Sciatic nerve (tissue), 2 donors: ENCODE measurements at regions of chr16 and their contacts with region 1.

Region 1: DNA sequence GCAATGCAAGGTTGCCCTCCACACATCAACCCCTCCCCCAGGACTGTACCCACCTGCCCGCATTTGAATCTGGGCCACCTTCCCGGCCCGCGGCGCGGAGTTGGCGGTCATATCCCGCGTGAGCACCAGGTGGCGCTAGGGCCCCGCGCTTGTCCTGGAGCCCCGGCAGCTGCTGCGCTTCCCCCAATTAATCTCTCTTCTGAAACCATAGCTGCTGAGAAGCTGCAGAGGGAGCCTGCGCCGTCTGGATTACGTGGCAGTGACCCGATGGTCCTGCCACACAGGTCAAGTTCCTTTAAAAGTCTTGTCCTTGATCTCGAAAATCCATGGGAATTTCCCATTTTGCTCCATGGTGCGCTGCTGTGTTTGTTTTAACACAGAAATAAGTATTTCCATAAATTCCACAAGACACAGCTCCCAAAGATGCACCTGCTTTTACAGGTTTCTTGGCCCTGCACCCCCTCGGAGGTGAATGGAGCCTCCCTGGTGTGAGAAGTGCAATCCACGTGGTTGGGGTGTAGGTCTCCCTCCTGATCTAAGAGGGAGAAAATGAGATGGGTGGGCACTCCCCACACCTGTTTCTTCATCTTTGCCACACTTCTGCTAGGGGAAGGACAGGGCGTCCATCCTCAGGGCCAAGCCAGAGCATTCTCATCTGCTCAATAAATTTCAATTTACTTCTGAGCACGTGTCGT is 22.1 kb downstream of the COX4I1 start:
- DNase-seq: peak; percentile 88
- ATAC-seq: peak; percentile 94

Region 2: GRCh38 chr16:85010931-85011845 is 810.4 kb before region 1 on chr16 and contains the start of gene ZDHHC7:
- intact Hi-C with region 1: no loop called
- DNase-seq: peak; percentile 94
- ATAC-seq: peak; percentile 98
- total RNA-seq, gene ZDHHC7: 48.8 TPM

Region 3: DNA sequence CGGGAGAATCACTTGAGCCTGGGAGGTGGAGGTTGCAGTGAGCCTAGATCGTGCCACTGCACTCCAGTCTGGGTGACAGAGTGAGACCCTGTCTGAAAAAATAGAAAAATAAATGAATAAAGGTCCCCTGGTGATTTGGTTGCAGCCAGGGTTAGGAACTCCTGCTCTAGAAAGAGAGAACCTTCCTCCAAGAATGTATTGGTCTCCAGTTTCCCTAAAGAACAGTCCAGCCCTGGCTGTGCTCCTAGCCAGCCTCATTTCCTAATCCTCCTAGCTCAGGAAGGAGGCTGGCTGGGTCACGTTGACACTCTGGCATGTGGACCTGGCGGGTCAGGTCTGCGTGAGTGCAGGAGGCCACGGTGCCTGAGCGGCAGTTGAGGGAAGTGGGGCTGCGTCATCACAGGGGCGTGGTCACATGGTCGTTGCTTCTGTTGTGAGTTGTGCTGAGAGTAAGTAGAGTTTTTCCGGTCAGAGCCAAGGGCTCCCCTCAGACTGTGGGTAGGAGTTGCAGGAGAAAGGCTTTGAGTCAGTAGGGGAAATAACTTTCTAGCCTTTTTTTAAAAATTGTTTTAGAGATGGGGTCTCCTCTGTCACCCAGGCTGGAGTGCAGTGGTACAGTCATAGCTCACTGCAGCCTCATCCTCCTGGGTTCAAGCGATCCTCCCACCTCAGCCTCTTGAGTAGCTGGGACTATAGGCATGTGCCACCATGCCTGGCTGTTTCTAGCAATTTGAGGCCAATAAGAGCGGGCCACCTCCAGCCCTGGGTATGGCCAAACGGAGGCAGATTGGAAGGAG is 515.4 kb before region 1 on chr16:
- intact Hi-C with region 1: no loop called
- DNase-seq: peak; percentile 94
- ATAC-seq: peak; percentile 79

Region 4: DNA sequence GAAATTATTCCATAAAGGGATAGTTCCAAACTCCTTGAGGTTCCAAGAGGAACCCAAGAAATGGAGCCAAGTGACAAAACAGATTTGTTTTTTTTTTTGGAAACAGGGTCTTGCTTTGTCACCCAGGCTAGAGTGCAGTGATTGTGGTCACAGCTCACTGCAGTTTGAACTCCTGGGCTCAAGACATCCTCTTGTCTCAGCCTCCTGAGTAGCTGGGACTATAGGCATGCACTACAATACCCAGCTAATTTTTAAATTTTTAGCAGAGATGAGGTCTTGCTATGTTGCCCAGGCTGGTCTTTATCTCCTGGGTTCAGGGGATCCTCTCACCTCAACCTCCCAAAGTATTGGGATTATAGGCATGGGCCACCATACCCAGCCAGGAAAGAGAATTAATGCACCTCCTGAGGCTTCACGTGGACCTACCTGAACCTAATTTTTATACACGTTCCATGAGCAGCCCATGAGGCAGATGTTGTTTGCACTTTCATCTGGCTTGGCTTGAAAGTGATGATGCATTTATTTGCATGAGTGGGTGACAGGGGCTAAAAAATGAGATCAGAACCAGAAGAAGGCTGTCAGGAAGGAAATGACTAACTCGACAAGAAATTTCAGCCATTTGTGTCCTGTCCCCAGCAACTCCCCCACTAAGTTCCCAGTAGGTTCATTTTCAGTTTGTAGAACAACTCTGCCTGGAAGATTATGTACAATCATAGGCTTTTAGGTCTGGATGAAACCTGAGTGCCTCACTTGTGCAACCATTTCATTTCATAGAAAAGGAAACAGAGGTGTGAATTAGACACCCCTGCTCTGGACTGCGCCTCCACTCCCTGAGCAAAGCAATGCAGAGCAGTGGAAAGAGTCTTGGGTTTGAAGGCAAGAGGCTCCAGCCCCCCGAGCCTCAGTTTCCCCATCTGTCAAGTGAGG is 67.1 kb after region 1 on chr16:
- intact Hi-C with region 1: no loop called
- DNase-seq: no peak
- ATAC-seq: no peak

Region 5: GRCh38 chr16:86016201-86016871 is 194.7 kb after region 1 on chr16:
- intact Hi-C with region 1: loop called (anchors 5 kb)
- DNase-seq: peak; percentile 56
- ATAC-seq: peak; percentile 78

Region 6: DNA sequence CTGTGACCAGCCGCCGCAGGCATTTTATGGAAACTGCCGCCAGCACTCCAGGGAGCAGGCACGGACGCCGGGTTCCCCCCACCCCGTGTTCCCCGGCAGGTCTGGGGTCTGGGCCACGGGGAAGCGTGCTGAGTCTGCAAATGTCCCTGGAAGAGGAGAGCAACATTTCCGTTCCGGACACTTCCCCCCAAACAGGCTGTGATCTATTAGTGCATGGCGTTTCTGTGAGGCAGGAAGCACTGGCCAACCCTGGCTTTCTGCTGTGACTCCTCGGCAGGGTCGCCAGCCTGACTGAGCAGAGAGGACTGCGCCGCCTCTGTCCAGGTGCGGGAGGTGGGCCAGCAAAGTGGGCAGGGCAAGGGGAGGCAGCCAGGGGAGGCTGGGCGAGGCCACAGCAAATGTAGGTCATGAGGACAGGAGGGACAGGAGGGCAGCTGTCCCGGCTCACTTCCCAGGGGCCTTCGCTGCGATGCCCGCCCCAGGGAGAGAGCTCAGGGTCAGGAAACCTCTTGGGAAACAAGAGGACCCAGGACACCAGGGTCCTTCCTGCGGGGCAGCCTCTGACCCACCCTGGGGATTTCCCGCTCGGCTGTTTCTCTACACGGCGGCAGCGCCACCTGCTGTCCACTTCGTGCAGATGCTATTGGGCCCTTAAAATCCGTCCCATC is 698.2 kb after region 1 on chr16:
- intact Hi-C with region 1: loop called (anchors 5 kb)
- DNase-seq: peak; percentile 77
- ATAC-seq: peak; percentile 63